PC-9 (cell line): ENCODE measurements at regions of chr10 and their contacts with region 1.

Region 1: DNA sequence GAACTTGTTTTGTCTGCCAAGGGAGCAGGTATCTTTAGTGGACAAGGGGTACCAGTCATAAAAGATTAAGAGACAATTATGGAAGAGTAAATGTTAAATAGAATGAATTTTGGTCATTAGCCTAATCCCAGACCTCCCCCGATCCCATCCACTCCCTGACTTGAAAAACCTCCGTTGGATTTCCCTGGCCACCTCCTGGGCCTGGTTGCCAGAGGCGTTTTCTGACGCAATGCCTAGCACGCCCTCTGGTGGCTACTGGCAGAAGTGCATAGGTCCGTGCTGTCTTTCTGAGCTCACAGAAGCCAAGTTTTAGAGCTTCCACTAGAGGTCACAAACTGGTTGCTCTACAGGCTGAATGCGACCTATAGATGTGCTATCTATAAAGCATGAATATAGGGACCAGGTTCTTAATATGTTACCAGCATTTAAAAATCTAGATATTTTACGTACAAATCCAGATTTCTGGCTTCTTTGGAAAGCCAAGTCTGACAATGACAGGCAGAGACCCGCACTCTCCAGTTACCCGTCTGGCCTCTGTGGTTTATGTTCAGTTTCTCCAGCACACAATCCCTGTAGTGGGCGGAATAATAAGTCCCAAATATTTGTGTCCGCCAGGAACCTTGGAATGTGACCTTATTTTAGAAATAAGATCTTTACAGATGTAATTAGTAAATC is 39.8 kb downstream of the SPOCK2 start:
- DNase-seq: peak; percentile 88 to 92
- H3K4me3 ChIP-seq: no peak overlapping the region
- H3K27ac ChIP-seq: no peak overlapping the region
- H3K4me1 ChIP-seq: peaks cover 8% of the 10 kb centered on the region; the same call in 1 of the 2 replicates
- H3K27me3 ChIP-seq: no peaks in the 10 kb centered on the region
- CTCF ChIP-seq: peak; percentile 100

Region 2: DNA sequence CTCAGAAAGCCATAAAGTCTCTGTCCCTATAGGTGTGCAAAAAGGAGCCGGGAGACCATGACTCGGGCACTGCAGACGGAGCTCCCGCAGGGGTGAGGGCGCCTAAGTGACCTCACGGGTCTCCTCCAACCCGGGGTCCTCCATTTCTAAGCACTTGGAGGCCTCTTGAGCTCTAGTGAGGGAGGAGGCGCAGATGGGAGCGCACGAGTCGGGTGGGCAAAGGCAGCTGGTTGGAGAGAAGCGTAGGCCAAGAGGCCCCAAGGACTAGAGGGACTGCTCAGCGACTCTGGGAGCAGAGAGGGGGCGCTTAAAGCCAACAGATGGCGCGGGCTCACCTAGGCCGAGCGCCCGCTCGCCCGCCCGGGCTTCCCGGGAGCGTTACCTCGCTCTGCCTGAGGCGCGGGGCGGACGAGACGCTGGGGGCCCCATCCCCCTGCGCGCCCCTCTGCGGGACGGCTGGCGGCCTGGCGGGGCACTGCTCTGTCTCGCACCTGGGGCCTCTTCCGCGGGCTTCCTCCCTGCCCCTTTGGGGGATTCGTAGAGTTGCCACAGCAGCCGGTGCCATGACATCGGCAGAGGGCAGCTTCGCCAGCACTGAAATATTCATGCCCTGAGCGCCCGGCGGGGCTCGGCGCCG is 652.4 kb before region 1 on chr10:
- CTCF ChIA-PET with region 1: no interaction called
- POLR2A ChIA-PET with region 1: no interaction called
- intact Hi-C with region 1: loop called (anchors 10 kb)
- DNase-seq: peak; percentile 49 to 70
- H3K4me3 ChIP-seq: peak overlapping the region; percentile 60
- H3K27ac ChIP-seq: no peak overlapping the region
- H3K4me1 ChIP-seq: peaks cover 41% of the 10 kb centered on the region
- H3K27me3 ChIP-seq: peaks cover 8% of the 10 kb centered on the region; the same call in 1 of the 2 replicates
- CTCF ChIP-seq: peak; percentile 57

Region 3: GRCh38 chr10:71911296-71911953 is 137.2 kb before region 1 on chr10:
- CTCF ChIA-PET with region 1: interaction called, 14 read pairs
- POLR2A ChIA-PET with region 1: no interaction called
- intact Hi-C with region 1: no loop called
- DNase-seq: no peak
- H3K4me3 ChIP-seq: no peak overlapping the region
- H3K27ac ChIP-seq: no peak overlapping the region
- H3K4me1 ChIP-seq: no peaks in the 10 kb centered on the region
- H3K27me3 ChIP-seq: no peaks in the 10 kb centered on the region
- CTCF ChIP-seq: no peak

Region 4: GRCh38 chr10:71999360-72000072 is 49.1 kb before region 1 on chr10:
- CTCF ChIA-PET with region 1: interaction called, 10 read pairs
- POLR2A ChIA-PET with region 1: no interaction called
- intact Hi-C with region 1: no loop called
- DNase-seq: no peak
- H3K4me3 ChIP-seq: no peak overlapping the region
- H3K27ac ChIP-seq: peak overlapping the region; percentile 69
- H3K4me1 ChIP-seq: peaks cover 29% of the 10 kb centered on the region
- H3K27me3 ChIP-seq: no peaks in the 10 kb centered on the region
- CTCF ChIP-seq: no peak

Region 5: DNA sequence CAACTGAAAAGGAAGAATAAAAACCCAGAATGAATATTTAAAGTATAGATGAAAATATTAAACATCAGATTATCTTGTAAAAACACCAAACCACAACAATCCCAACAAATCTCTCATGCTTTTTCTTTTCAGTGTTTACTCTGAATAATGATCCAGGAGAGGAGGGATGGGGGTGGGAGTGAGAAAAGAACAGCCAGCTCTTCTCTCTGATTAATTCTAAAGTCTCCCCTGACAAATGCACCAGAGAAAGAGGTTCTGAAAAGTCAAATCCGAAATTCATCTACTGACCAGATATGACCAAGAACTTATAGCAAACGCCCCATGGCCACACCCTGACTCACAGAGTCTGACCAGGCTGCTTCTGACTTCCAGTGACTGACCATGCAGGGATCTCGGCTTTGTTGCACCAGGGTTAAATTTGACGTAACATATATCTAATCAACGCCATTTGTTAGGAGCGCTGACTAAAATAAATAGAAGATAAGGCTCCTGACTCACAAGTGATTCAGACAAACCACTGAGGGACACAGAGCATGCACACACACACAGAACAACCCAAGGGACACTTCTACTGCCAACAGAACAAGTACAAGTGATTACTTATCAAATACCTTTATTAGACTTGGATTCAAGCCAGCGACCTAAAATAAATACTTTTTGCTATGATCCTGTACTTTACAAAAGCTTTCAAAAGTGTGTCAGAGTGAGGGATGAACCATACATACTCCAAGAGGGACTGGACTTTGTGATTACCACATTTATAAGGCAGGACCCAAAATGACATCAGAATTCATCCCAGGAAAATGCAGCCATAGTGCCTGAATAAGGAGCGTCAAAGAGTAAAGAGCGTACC is 49.1 kb after region 1 on chr10:
- CTCF ChIA-PET with region 1: interaction called, 6 read pairs
- POLR2A ChIA-PET with region 1: no interaction called
- intact Hi-C with region 1: loop called (anchors 1 kb)
- DNase-seq: peak; percentile 84 to 100
- H3K4me3 ChIP-seq: no peak overlapping the region
- H3K27ac ChIP-seq: peak overlapping the region; percentile 68
- H3K4me1 ChIP-seq: peaks cover 49% of the 10 kb centered on the region
- H3K27me3 ChIP-seq: no peaks in the 10 kb centered on the region
- CTCF ChIP-seq: no peak

Region 6: GRCh38 chr10:72234560-72235095 is 186.0 kb after region 1 on chr10:
- CTCF ChIA-PET with region 1: interaction called, 13 read pairs
- POLR2A ChIA-PET with region 1: no interaction called
- intact Hi-C with region 1: no loop called
- DNase-seq: no peak
- H3K4me3 ChIP-seq: no peak overlapping the region
- H3K27ac ChIP-seq: 0 out of 2 replicates have a peak overlapping the region, but pooled peaks have one; percentile 8
- H3K4me1 ChIP-seq: no peaks in the 10 kb centered on the region
- H3K27me3 ChIP-seq: no peaks in the 10 kb centered on the region
- CTCF ChIP-seq: no peak

Region 7: DNA sequence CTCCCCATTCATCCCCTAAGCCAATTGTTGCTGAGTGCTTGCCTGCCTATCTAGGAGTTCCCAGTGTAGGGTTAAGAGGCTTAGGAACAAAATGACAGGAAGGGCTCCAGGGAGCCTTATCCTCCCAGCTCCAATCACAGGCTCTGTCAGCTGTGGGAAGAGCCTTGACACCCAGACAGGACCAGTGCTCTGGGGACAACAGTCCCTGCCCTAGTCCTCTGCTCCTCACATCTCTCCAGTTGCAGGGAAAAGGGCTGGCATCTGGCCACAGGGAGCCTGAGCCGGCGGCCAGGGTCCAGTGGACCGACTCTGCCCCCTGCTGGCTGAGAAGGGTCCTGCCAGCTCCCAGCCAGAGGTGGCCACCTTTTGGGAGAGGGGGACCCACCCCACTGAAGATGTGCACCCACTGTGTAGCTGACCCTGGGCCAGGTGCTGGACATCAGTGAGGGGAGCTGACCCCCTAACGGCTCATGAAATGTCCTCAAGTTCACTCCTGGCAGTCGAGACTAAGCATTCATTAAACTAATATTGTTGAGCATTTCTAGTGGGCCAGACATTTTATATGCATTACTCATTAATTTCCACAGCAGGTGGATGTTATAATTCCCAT is 288.5 kb after region 1 on chr10:
- CTCF ChIA-PET with region 1: interaction called, 7 read pairs
- POLR2A ChIA-PET with region 1: no interaction called
- intact Hi-C with region 1: loop called (anchors 1 kb)
- DNase-seq: peak; percentile 52 to 84
- H3K4me3 ChIP-seq: no peak overlapping the region
- H3K27ac ChIP-seq: no peak overlapping the region
- H3K4me1 ChIP-seq: peaks cover 22% of the 10 kb centered on the region
- H3K27me3 ChIP-seq: no peaks in the 10 kb centered on the region
- CTCF ChIP-seq: peak; percentile 99